ENCODE measurements at regions of chr12 and their contacts with region 1.

Region 1: DNA sequence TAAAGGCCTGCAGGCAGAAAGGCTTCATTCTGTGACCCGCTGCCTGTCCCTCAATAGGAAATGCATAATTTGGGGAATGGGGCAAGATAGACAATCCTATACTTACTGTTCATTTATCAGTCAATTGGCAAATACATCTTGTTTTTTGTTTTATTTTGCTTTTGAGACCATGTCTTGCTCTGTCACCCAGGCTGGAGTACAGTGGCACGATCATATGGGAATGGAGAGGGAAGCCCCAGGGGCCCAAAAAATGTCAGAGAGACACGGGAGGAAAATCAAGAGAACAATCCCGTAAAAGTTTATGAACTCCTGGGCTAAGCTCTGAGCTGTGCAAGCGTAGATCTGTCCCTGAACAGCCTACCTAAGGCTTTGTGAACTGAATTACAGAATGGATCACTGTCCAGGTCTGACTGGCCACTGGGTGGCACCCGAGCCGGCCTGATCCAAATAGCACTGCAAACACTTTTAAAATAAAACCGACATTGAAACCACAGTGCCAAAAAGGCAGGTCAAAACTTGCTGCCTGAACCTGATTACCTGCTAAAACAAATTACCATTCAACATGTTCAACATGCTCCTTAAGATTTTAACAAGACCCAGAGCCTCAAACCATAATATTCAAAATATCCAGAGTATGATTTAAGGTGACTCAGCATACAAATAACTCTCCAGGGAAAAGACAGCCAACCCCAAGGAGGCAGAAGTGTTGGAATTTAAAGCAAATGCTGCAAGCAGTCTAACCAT is 11.8 kb downstream of the COPS7A start:
- DNase-seq: peak; percentile 80
- H3K4me3 Mint-ChIP-seq: no peak overlapping the region
- H3K27ac Mint-ChIP-seq: no peak overlapping the region
- H3K4me1 Mint-ChIP-seq: peaks cover 5% of the 10 kb centered on the region
- H3K27me3 Mint-ChIP-seq: no peaks in the 10 kb centered on the region

Region 2: GRCh38 chr12:6778574-6779550 is 43.2 kb after region 1 on chr12:
- intact Hi-C with region 1: loop called (anchors 1 kb)
- DNase-seq: peak; percentile 97
- H3K4me3 Mint-ChIP-seq: peak overlapping the region; percentile 84
- H3K27ac Mint-ChIP-seq: peak overlapping the region; percentile 88
- H3K4me1 Mint-ChIP-seq: peaks cover 76% of the 10 kb centered on the region
- H3K27me3 Mint-ChIP-seq: no peaks in the 10 kb centered on the region

Measured in activated CD4-positive, alpha-beta T cell treated with anti-CD3 and anti-CD28 coated beads, Interleukin-2, amount 10 ng/mL, durations not matched to agents 24 days and 14 days (primary cell).